ENCODE measurements at regions of chr16 and their contacts with region 1.

Region 1: GRCh38 chr16:51734220-51734619 is 583.1 kb upstream of the SALL1 start:
- DNase-seq: no peak
- ATAC-seq: no peak
- H3K4me3 ChIP-seq: no peak overlapping the region
- H3K27ac ChIP-seq: no peak overlapping the region
- H3K4me1 ChIP-seq: no peaks in the 10 kb centered on the region
- H3K27me3 ChIP-seq: no peaks in the 10 kb centered on the region

Region 2: DNA sequence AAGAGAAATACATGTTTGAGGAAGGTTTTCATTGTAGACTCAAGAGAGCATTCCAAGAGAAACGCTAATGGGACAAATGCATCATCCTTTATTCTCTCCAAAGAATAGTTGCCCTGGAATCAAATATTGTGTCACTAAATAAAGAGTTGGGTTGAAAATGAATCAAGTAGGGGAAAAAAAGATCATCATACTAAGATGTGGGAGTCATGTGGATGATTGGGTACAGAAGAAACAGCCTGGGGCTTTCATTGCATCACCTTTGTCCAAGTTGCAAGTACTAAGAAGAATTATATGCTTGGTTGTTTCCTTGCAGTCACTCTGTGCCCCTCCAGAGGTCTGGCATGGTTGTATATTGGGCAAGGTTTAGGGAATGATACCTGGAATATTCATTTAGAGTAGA is 153.8 kb after region 1 on chr16:
- intact Hi-C with region 1: no loop called
- DNase-seq: no peak
- ATAC-seq: no peak
- H3K4me3 ChIP-seq: no peak overlapping the region
- H3K27ac ChIP-seq: no peak overlapping the region
- H3K4me1 ChIP-seq: no peaks in the 10 kb centered on the region
- H3K27me3 ChIP-seq: no peaks in the 10 kb centered on the region

Region 3: GRCh38 chr16:52035436-52035835 is 301.2 kb after region 1 on chr16:
- intact Hi-C with region 1: loop called in 1 of 4 experiments (anchors 5 kb)
- DNase-seq: no peak
- ATAC-seq: no peak
- H3K4me3 ChIP-seq: no peak overlapping the region
- H3K27ac ChIP-seq: no peak overlapping the region
- H3K4me1 ChIP-seq: no peaks in the 10 kb centered on the region
- H3K27me3 ChIP-seq: no peaks in the 10 kb centered on the region